A549 (cell line): ENCODE measurements at regions of chr3 and their contacts with region 1.

Region 1: GRCh38 chr3:53219895-53220483 is 35.8 kb downstream of the TKT start:
- DNase-seq: peak; percentile 74 to 90
- ATAC-seq: peak; percentile 73 to 74
- H3K4me3 ChIP-seq: no peak overlapping the region
- H3K27ac ChIP-seq: peak overlapping the region; percentile 60 to 78; a peak in 5 of 6 replicates
- H3K4me1 ChIP-seq: peaks cover 30% of the 10 kb centered on the region
- CTCF ChIP-seq: peak; percentile 83
- EP300 ChIP-seq: no peak
- POLR2A ChIP-seq: no peak
- RAD21 ChIP-seq: peak; percentile 77 to 80

Region 2: DNA sequence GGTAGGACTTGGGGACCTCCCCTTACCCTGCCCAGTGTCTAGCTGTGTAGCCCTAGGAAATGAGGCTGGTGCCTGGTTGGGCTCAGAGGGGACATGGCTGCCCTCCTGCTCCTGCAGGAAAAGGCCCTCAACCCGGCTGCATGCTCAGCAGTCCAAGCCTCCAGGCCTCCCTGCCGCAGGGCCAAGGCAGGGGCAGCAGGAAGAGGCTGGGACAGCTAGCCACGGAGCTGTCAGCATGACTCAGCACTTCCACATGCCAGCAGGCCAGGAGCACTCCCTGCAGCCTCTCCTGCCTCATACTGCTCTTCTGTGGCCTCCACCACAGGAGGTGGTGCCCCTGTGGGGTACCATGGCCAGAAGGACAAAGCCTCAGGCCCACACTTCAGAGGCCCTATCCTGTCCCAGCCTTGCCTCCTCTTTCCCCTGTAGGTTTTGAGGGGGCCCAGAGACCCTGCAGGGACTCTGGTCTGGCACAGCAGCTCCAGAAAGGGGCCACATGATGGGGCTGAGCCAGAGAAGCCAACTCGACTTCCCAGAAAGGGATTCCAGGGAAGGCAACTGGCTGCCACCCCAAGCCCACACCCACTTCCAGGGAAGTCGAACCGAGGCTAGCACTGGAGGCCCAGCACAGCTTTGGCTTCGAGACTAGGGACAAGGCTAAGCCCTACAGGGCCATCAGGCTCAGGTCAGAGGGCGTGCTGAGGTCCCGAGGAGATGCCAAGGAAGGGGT is 16.3 kb after region 1 on chr3:
- CTCF ChIA-PET with region 1: interaction called, 69 read pairs
- POLR2A ChIA-PET with region 1: no interaction called
- DNase-seq: peak; percentile 55 to 84
- ATAC-seq: peak; percentile 26 to 51; a peak in 5 of 6 replicates
- H3K4me3 ChIP-seq: peak overlapping the region; percentile 18; the same call in 1 of the 3 replicates
- H3K27ac ChIP-seq: peak overlapping the region; percentile 100
- H3K4me1 ChIP-seq: peaks cover 97% of the 10 kb centered on the region
- CTCF ChIP-seq: no peak
- EP300 ChIP-seq: no peak; a peak in 1 of 5 replicates
- POLR2A ChIP-seq: no peak
- RAD21 ChIP-seq: peak in 1 of 2 experiments; percentile 3; a peak in 1 of 5 replicates

Region 3: DNA sequence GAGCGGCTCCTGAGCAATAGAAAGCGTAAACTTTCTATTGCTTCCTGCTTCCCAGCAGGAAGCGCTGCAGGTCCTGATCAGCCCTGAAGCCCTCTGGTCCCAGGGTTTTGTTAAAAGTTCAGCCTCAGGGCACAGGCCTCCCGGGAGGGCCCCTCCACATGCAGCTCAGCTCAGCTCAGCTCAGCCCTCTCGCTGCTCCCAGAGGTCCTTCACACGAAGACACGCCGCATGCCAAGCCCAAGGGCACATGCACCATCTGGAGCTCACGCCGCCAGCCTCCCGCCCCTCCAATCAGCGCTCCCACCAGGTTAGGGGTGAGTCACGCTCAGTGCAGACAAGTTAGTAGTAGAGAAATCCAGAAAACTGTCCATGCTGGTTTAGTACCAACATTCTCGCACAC is 23.2 kb after region 1 on chr3:
- CTCF ChIA-PET with region 1: interaction called, 12 read pairs
- POLR2A ChIA-PET with region 1: no interaction called
- DNase-seq: peak in 1 of 2 experiments; percentile 60
- ATAC-seq: peak in 1 of 2 experiments; percentile 2; a peak in 4 of 6 replicates
- H3K4me3 ChIP-seq: peak overlapping the region; percentile 100; the same call in 2 of the 3 replicates
- H3K27ac ChIP-seq: peak overlapping the region; percentile 100
- H3K4me1 ChIP-seq: peaks cover 99% of the 10 kb centered on the region
- CTCF ChIP-seq: no peak
- EP300 ChIP-seq: no peak
- POLR2A ChIP-seq: no peak
- RAD21 ChIP-seq: no peak

Region 4: GRCh38 chr3:53616321-53616720 is 396.3 kb after region 1 on chr3:
- CTCF ChIA-PET with region 1: no interaction called
- POLR2A ChIA-PET with region 1: no interaction called
- DNase-seq: no peak
- ATAC-seq: no peak
- H3K4me3 ChIP-seq: no peak overlapping the region
- H3K27ac ChIP-seq: no peak overlapping the region
- H3K4me1 ChIP-seq: no peaks in the 10 kb centered on the region
- CTCF ChIP-seq: no peak
- EP300 ChIP-seq: no peak
- POLR2A ChIP-seq: no peak
- RAD21 ChIP-seq: no peak